Right cardiac atrium (tissue), 5 donors: ENCODE measurements at regions of chr5 and their contacts with region 1.

Region 1: GRCh38 chr5:82839881-82840280 is 237.3 kb downstream of the TMEM167A start:
- DNase-seq: no peak
- ATAC-seq: no peak
- H3K4me3 ChIP-seq: no peak overlapping the region
- H3K27ac ChIP-seq: no peak overlapping the region
- H3K4me1 ChIP-seq: no peaks in the 10 kb centered on the region
- H3K27me3 ChIP-seq: no peaks in the 10 kb centered on the region

Region 2: DNA sequence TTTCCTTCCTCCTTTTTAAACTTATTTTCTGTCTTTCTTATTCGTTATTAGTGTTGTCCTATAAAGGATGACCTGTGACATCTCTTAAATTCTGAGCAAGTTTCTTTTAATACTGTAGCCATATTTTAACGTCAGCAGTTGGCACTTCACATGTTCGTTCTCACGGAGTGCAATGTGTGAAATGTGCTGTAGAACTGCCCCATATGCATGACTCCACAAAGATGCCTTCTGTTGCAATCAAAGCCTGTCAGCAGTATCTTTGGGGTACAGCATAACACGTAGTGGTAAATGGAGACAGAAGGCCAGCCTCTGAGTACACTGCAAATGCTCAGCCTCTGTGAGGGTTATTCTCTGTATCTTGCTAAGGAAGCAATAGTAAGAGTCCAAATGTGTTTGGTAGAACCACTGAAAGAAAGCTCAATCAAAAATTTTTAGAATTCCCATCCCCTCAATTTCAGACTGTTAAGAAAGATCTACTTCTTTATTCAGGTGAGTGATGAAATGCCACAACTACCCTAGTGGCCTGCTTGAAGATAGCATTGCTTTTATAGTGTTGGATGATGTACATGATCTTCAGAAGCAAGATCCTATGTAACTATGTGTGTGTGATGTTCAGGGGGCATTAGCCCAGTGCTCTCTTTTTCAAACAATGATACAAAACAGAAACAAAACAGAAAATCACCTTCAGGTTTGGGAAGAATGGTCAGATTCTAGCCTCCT is 40.4 kb before region 1 on chr5:
- intact Hi-C with region 1: loop called in 1 of 4 experiments (anchors 5 kb)
- DNase-seq: no peak
- ATAC-seq: no peak
- H3K4me3 ChIP-seq: no peak overlapping the region
- H3K27ac ChIP-seq: no peak overlapping the region
- H3K4me1 ChIP-seq: no peaks in the 10 kb centered on the region
- H3K27me3 ChIP-seq: no peaks in the 10 kb centered on the region